PC-9 (cell line): ENCODE measurements at regions of chr16 and their contacts with region 1.

Region 1: GRCh38 chr16:19874851-19875546 is 9.6 kb downstream of the GPRC5B start:
- DNase-seq: no peak
- H3K4me3 ChIP-seq: no peak overlapping the region
- H3K27ac ChIP-seq: no peak overlapping the region
- H3K4me1 ChIP-seq: no peaks in the 10 kb centered on the region
- H3K27me3 ChIP-seq: no peaks in the 10 kb centered on the region
- CTCF ChIP-seq: no peak

Region 2: GRCh38 chr16:19680881-19681340 is 194.1 kb before region 1 on chr16:
- CTCF ChIA-PET with region 1: no interaction called
- POLR2A ChIA-PET with region 1: interaction called, 36 read pairs
- intact Hi-C with region 1: no loop called
- DNase-seq: peak; percentile 48 to 70
- H3K4me3 ChIP-seq: no peak overlapping the region
- H3K27ac ChIP-seq: no peak overlapping the region
- H3K4me1 ChIP-seq: peaks cover 9% of the 10 kb centered on the region
- H3K27me3 ChIP-seq: no peaks in the 10 kb centered on the region
- CTCF ChIP-seq: 0 out of 2 replicates have a peak, but pooled peaks have one; percentile 23

Region 3: GRCh38 chr16:19898166-19898565 is 23.2 kb after region 1 on chr16:
- CTCF ChIA-PET with region 1: no interaction called
- POLR2A ChIA-PET with region 1: no interaction called
- intact Hi-C with region 1: no loop called
- DNase-seq: no peak
- H3K4me3 ChIP-seq: no peak overlapping the region
- H3K27ac ChIP-seq: no peak overlapping the region
- H3K4me1 ChIP-seq: no peaks in the 10 kb centered on the region
- H3K27me3 ChIP-seq: peaks cover 18% of the 10 kb centered on the region; the same call in 1 of the 2 replicates
- CTCF ChIP-seq: no peak